ENCODE measurements at regions of chr4 and their contacts with region 1.

Region 1: GRCh38 chr4:3442959-3443749 is 1.4 kb downstream of the HGFAC start:
- DNase-seq: no peak
- ATAC-seq: peak; percentile 86
- H3K4me3 ChIP-seq: no peak overlapping the region
- H3K27ac ChIP-seq: no peak overlapping the region
- H3K4me1 ChIP-seq: no peaks in the 10 kb centered on the region
- H3K27me3 ChIP-seq: no peaks in the 10 kb centered on the region
- CTCF ChIP-seq: peak; percentile 82
- POLR2A ChIP-seq: no peak
- RAD21 ChIP-seq: peak; percentile 95

Region 2: GRCh38 chr4:3346146-3346545 is 97.0 kb before region 1 on chr4:
- CTCF ChIA-PET with region 1: interaction called, 3 read pairs
- POLR2A ChIA-PET with region 1: no interaction called
- dilution Hi-C with region 1: no loop called
- in situ Hi-C with region 1: loop called (anchors 5 kb)
- intact Hi-C with region 1: loop called (anchors 1 kb)
- DNase-seq: peak; percentile 84
- ATAC-seq: peak; percentile 84
- H3K4me3 ChIP-seq: no peak overlapping the region
- H3K27ac ChIP-seq: no peak overlapping the region
- H3K4me1 ChIP-seq: peaks cover 13% of the 10 kb centered on the region
- H3K27me3 ChIP-seq: no peaks in the 10 kb centered on the region
- CTCF ChIP-seq: peak; percentile 98
- POLR2A ChIP-seq: no peak
- RAD21 ChIP-seq: peak; percentile 97

Measured in IMR-90 (cell line).